ENCODE measurements at regions of chr20 and their contacts with region 1.

Region 1: GRCh38 chr20:47379433-47380150 is 23.1 kb upstream of the ZMYND8 start:
- DNase-seq: no peak
- H3K4me3 Mint-ChIP-seq: no peak overlapping the region
- H3K27ac Mint-ChIP-seq: no peak overlapping the region
- H3K4me1 Mint-ChIP-seq: peaks cover 18% of the 10 kb centered on the region
- H3K27me3 Mint-ChIP-seq: no peaks in the 10 kb centered on the region

Region 2: GRCh38 chr20:45576995-45577394 is 1802.6 kb before region 1 on chr20:
- CTCF ChIA-PET with region 1: no interaction called
- POLR2A ChIA-PET with region 1: no interaction called
- intact Hi-C with region 1: no loop called
- DNase-seq: no peak
- H3K4me3 Mint-ChIP-seq: no peak overlapping the region
- H3K27ac Mint-ChIP-seq: no peak overlapping the region
- H3K4me1 Mint-ChIP-seq: no peaks in the 10 kb centered on the region
- H3K27me3 Mint-ChIP-seq: peaks cover 13% of the 10 kb centered on the region

Region 3: DNA sequence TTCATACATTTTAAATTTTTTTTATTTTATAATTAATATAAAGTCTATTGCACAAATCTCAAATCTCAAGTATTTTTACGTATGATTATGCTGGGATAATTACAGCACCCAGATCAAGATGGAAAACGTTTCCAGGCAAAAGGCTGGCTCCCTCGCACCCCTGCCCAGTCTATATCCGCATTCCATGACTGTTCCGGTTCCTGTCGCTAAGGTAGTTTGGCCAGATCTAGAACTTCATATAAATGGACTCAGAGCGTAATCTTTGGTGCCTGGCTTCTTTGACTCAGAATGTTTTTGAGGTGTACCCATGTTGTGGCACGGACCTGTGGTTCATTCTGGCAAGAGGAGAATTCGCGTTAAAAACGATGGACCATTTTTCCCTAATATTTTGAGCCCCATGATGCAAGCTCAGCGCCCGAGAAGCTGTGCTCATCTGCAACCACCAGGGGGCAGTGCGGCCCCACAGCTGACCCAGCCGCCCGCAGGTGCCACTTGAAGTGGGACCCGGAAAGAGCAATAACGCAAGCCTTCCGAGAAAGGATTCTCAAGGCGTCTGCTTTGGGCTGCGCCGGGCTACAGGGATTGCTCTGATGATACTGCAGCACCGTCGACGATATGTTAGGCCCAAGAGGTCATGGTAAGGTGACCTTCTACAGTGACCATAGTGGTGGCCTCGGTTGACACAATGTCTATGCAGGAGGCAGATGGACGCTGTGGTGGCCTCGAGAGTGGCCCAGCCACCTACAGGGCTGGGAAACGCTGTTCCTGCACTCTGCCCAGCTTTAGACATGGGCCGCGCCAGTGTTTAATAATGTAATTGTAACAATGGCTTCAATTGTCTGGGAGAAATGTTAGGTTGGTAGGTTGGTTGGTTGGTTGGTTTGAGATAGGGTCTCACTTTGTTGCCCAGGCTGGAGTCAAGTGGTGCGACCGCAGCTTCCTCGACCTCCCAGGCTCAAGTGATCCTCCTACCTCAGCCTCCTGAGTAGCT is 183.2 kb before region 1 on chr20:
- CTCF ChIA-PET with region 1: interaction called, 207 read pairs
- POLR2A ChIA-PET with region 1: interaction called, 5 read pairs
- intact Hi-C with region 1: loop called (anchors 1 kb)
- DNase-seq: peak; percentile 88
- H3K4me3 Mint-ChIP-seq: no peak overlapping the region
- H3K27ac Mint-ChIP-seq: no peak overlapping the region
- H3K4me1 Mint-ChIP-seq: peaks cover 15% of the 10 kb centered on the region
- H3K27me3 Mint-ChIP-seq: peaks cover 3% of the 10 kb centered on the region

Region 4: GRCh38 chr20:47235853-47236638 is 143.5 kb before region 1 on chr20:
- CTCF ChIA-PET with region 1: interaction called, 10 read pairs
- POLR2A ChIA-PET with region 1: no interaction called
- intact Hi-C with region 1: no loop called
- DNase-seq: no peak
- H3K4me3 Mint-ChIP-seq: no peak overlapping the region
- H3K27ac Mint-ChIP-seq: no peak overlapping the region
- H3K4me1 Mint-ChIP-seq: peaks cover 3% of the 10 kb centered on the region
- H3K27me3 Mint-ChIP-seq: no peaks in the 10 kb centered on the region

Region 5: GRCh38 chr20:47272893-47273590 is 106.5 kb before region 1 on chr20:
- CTCF ChIA-PET with region 1: interaction called, 663 read pairs
- POLR2A ChIA-PET with region 1: interaction called, 28 read pairs
- intact Hi-C with region 1: loop called (anchors 1 kb)
- DNase-seq: peak; percentile 53
- H3K4me3 Mint-ChIP-seq: peak overlapping the region; percentile 51
- H3K27ac Mint-ChIP-seq: peak overlapping the region; percentile 83
- H3K4me1 Mint-ChIP-seq: peaks cover 39% of the 10 kb centered on the region
- H3K27me3 Mint-ChIP-seq: no peaks in the 10 kb centered on the region

Region 6: GRCh38 chr20:47368301-47368700 is 11.3 kb before region 1 on chr20:
- CTCF ChIA-PET with region 1: interaction called, 21 read pairs
- POLR2A ChIA-PET with region 1: no interaction called
- intact Hi-C with region 1: no loop called
- DNase-seq: no peak
- H3K4me3 Mint-ChIP-seq: no peak overlapping the region
- H3K27ac Mint-ChIP-seq: no peak overlapping the region
- H3K4me1 Mint-ChIP-seq: peaks cover 3% of the 10 kb centered on the region
- H3K27me3 Mint-ChIP-seq: no peaks in the 10 kb centered on the region

Region 7: DNA sequence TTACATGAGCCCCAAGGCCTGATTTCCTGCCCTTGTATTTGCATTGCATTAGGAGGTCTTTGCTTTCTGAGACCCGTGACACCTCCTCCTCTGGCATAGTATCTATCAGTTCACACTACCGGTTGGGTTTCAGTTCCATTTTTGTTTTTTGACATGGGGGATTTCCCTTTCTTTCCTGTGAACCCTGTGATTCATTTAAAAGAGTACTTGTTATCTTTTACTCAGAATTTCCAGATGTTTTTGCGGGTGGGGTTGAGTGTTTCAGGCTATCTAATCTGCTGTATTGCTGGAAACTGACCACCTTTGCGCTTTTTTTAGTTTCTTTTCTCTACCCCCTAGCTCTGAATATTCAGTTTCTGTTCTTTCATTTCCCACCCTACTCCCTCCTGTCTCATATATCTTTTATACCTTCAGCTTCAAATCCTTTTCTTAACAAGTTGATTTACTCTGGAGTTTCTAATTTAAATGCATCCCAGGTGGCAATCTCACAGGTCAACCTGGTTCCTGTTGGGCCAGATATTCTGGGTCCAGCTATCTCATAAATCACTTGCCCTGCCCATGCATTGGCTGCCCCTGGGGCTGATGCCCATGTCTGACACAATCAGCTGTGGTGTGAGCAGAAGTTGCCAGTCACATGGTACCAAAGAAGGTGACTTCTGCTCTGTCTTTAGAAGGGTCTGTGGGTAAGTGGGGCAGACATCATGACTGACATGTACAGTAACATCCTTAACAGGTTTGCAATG is 107.8 kb after region 1 on chr20:
- CTCF ChIA-PET with region 1: interaction called, 16 read pairs
- POLR2A ChIA-PET with region 1: no interaction called
- intact Hi-C with region 1: no loop called
- DNase-seq: peak; percentile 77
- H3K4me3 Mint-ChIP-seq: peak overlapping the region; percentile 30
- H3K27ac Mint-ChIP-seq: peak overlapping the region; percentile 97
- H3K4me1 Mint-ChIP-seq: peaks cover 55% of the 10 kb centered on the region
- H3K27me3 Mint-ChIP-seq: no peaks in the 10 kb centered on the region

Region 8: GRCh38 chr20:47551841-47552240 is 172.2 kb after region 1 on chr20:
- CTCF ChIA-PET with region 1: no interaction called
- POLR2A ChIA-PET with region 1: no interaction called
- intact Hi-C with region 1: no loop called
- DNase-seq: no peak
- H3K4me3 Mint-ChIP-seq: no peak overlapping the region
- H3K27ac Mint-ChIP-seq: no peak overlapping the region
- H3K4me1 Mint-ChIP-seq: peaks cover 36% of the 10 kb centered on the region
- H3K27me3 Mint-ChIP-seq: no peaks in the 10 kb centered on the region